Right lobe of liver (tissue), 6 donors: ENCODE measurements at regions of chr10 and their contacts with region 1.

Region 1: DNA sequence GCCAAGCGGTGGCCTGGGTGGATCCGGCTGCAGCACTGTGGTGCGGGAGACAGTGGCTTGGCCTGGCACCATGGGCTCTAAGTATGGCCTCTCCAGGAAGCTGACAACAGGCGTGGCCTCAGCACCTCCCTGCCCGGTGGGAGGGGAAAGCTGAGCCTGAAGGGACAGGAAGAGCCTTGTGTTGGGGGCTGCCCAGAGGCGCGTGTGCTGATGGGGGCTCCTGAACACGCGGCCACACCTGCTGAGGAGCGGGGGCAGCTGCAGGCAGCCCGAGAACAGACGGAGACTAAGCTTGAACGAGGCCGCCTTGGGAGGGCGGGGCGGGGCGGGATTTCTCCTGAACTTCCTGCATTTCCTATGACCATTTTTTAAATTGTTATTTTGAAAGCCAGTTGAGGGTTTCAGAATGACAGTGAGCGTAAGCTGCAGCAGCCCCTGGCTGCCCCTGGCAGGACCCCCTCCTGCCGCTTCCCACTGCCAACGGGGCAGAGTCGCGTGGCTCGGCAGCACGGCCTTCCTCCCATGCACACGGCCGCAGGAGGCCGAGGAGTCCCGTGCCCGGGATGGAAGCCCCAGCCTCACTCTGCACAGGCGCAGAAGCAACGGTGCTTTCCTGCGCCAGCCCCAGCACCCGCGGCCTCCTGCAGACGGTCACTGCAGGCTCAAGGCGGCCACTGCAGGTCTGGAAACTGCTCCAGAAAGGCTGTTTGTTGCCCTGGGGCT is 43.2 kb downstream of the DPYSL4 start:
- DNase-seq: no peak
- ATAC-seq: peak; percentile 47 to 61 (median 56)
- H3K4me3 ChIP-seq: peak overlapping the region in 1 of 3 donors; percentile 4
- H3K27ac ChIP-seq: no peak overlapping the region
- H3K4me1 ChIP-seq: no peaks in the 10 kb centered on the region
- H3K27me3 ChIP-seq: no peaks in the 10 kb centered on the region
- CTCF ChIP-seq: no peak
- POLR2A ChIP-seq: no peak

Region 2: DNA sequence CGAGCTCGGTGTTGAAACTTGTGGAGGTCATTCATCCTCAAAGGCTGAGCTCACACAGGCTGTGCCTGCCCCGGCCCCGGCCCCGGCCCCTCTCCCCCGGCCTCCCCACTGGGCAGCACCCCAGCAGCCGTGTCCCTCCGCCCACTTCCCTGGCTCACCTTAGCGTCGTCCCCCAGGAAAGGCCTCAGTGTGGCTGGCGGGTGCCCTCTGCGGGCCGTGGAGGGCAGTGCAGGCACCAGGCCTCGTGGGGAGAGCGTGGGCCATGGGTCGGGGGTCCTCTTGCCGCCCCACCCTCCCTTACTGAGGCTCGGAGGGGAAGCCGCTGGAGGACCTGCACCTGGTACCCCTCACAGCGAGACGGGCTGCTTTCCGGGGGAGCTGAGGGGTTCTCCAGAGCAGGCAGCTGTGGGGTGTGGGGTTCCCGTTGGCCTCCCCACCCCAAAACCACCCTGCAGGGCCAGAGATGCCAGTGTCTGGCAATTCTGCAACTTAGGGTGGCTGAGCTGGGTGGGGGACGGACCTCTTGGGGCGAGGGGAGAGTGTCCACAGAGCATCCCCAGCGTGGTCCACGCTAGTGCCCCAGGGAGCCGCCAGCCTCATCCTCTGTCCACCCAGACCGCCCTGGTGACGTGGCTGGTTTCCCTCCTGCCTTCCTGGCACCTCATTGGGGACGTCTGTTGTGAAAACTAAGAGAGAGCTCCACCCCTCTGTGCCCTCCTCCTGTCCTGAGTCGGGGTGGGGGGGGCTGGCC is 87.4 kb before region 1 on chr10:
- intact Hi-C with region 1: no loop called
- DNase-seq: peak in 2 of 3 donors; percentile 42 to 58
- ATAC-seq: peak; percentile 66 to 86 (median 81)
- H3K4me3 ChIP-seq: no peak overlapping the region
- H3K27ac ChIP-seq: no peak overlapping the region
- H3K4me1 ChIP-seq: no peaks in the 10 kb centered on the region
- H3K27me3 ChIP-seq: no peaks in the 10 kb centered on the region
- CTCF ChIP-seq: peak; percentile 72 to 89 (median 82)
- POLR2A ChIP-seq: no peak

Region 3: DNA sequence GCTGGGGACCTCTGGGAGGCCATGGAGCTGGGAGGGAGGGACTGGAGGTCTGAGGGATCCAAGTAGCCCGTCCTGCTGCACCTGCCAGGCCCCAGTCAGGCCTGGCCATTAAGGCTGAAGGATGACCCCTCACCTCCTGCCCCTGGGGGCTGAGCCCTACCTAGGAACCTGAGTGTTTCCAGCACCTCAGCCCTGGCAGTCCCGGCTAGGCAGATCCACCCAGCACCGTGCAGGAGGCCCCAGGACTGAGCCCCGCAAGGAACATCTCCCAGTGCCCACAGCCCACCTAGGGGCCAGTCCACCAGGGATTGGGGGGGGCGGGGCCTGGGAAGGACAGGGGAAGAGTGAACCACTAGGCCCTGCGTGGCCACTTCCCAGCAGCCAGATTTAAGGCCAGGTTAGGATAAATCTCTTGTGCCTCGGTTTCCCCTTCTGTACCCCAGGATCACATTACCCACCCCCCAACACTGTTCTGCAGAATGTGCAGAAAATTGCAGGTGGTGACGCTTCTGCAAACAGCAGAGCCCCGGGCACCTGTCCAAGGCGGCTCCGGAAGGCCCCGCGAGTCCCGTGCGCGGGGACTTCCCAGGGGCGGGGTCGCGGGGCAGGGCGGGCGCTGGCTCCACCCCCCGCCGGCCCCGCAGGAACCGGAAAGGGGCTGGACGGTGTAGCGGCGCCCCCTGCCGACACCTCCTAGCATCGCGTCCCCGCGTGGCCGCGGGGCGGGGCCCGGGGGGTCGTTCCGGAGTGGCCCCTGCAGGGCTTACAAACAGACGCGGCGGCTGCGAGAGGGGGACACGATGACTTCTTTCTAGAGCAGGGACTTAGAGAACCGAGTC is 222.9 kb after region 1 on chr10:
- intact Hi-C with region 1: loop called in 1 of 2 experiments (anchors 5 kb)
- DNase-seq: peak; percentile 91 to 98 (median 92)
- ATAC-seq: peak; percentile 83 to 91 (median 86)
- H3K4me3 ChIP-seq: peak overlapping the region in 1 of 3 donors; percentile 10
- H3K27ac ChIP-seq: peak overlapping the region in 1 of 3 donors; percentile 29
- H3K4me1 ChIP-seq: peaks cover 0 to 19% (median 5%) of the 10 kb centered on the region in 4 donors
- H3K27me3 ChIP-seq: no peaks in the 10 kb centered on the region
- CTCF ChIP-seq: peak; percentile 90 to 98 (median 96)
- POLR2A ChIP-seq: no peak

Region 4: GRCh38 chr10:132862485-132863420 is 632.8 kb after region 1 on chr10:
- intact Hi-C with region 1: no loop called
- DNase-seq: peak; percentile 14 to 51 (median 41)
- ATAC-seq: peak in 1 of 4 donors; percentile 21
- H3K4me3 ChIP-seq: no peak overlapping the region
- H3K27ac ChIP-seq: no peak overlapping the region
- H3K4me1 ChIP-seq: no peaks in the 10 kb centered on the region
- H3K27me3 ChIP-seq: no peaks in the 10 kb centered on the region
- CTCF ChIP-seq: no peak
- POLR2A ChIP-seq: no peak